GM10248 (cell line): ENCODE measurements at regions of chr17 and their contacts with region 1.

Region 1: GRCh38 chr17:42183741-42184711 is 1.2 kb downstream of the HCRT start:
- DNase-seq: peak; percentile 95
- CTCF ChIP-seq: peak; percentile 90

Region 2: GRCh38 chr17:42087736-42088705 is 96.0 kb before region 1 on chr17:
- CTCF ChIA-PET with region 1: no interaction called
- POLR2A ChIA-PET with region 1: no interaction called
- DNase-seq: no peak
- CTCF ChIP-seq: no peak

Region 3: DNA sequence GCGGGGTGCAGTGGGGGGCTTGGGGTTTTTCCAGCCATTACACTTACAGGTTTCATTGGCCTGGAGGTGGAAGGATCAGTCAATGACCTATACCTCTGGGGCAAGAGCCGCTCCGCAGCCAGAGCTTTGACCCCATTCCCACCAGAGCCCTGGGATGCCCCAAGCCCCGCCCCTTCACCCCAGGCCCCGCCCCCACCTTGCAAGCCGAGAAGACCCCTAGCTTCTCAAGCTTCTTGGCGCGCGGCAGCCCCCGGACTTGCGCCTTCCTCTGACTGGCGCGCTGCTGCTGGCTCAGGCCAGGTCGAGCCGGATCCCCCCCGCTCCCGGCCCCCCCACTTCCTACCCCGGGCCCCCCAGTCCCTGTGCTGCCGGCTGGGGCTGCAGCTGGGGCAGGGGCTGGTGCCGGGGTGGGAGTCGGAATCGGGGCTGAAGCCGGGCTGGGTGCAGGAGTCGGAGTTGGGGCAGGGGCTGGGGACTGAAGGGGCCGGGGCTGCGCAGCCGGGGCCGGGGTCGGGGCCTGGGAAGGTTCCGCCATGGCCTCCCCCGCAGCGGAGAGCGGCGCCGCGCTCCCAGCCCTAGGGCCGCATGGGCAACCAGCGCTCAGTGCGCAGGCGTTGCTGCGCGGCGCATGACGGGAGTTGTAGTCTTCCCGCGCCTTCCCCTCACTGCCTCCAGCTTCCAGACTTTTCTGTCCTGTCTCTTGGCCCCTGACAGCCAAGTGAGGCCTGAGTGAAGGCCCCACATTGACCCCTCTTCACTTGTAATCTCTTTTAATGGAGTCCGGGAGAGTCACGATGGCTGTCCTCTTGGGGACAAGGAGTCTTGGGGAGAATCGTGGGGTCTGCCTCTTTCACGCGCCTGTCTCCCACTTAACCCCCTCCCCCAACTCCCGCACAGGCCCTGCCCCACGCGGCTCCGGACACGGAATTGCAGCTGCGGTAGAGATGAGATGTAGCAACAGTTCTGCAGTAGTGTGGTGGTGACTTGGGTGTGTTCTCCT is 63.0 kb before region 1 on chr17 and contains the start of gene KAT2A:
- CTCF ChIA-PET with region 1: interaction called, 53 read pairs
- POLR2A ChIA-PET with region 1: no interaction called
- DNase-seq: peak; percentile 94
- CTCF ChIP-seq: no peak

Region 4: DNA sequence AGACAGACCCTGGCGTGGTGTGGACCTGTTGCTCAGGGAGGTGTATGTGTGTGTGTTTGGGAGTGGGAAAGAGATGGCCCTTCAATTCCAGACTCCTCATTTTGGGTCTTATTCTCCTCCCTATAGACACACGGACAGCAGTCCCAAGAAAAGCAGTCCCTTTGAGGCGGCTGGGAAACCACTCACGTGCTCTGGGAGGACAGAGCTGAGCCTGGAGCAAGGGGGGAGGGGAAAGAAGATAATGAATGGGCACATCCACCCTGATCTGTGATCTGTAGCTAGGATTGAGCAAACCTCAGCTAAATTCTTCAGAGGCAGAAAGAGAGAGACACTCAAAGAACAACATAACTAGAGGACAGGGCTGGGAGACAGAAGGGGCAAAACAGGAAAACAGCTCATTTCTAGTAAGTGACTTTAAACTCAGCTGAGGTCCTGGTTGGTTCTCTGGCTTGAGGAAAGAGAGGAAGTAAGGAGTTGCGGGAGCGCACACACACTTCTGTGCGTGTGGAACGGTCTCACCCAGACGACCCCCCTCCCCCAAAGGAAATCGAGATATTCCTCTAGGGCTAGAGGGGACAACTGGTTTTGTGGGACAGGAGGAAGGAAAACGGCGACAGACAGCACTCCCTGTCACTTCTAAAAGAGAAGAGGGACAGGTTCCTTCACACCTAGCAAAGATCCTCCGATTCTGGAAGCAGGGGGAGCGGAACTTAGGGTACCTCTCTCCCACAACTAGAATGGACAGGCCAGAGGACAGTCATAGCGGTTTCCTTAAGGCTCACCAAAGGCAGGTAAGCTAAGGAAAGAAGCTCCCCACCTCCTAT is 29.9 kb before region 1 on chr17:
- CTCF ChIA-PET with region 1: interaction called, 10 read pairs
- POLR2A ChIA-PET with region 1: interaction called, 3 read pairs
- DNase-seq: no peak
- CTCF ChIP-seq: no peak

Region 5: DNA sequence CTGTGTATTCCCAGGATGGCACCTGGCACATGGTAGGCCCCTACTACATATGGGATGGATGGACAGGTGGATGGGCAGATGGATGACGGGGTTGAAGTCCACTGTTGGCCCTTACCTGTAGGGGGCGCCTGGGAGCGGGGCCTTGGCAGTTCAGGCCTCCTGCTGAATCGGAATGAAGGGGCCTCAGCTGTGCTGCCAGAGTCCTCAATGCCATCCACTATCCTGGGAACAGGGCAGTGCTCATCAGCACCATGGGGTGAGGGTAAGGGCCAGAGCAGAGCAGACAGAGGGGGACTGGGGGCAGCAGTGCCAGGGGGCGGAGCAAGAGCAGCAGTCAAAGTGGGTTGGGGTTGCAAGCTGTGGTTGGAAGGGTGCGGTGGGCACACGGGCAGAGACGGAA is 20.9 kb before region 1 on chr17:
- CTCF ChIA-PET with region 1: interaction called, 30 read pairs
- POLR2A ChIA-PET with region 1: no interaction called
- DNase-seq: peak; percentile 61
- CTCF ChIP-seq: peak; percentile 35

Region 6: DNA sequence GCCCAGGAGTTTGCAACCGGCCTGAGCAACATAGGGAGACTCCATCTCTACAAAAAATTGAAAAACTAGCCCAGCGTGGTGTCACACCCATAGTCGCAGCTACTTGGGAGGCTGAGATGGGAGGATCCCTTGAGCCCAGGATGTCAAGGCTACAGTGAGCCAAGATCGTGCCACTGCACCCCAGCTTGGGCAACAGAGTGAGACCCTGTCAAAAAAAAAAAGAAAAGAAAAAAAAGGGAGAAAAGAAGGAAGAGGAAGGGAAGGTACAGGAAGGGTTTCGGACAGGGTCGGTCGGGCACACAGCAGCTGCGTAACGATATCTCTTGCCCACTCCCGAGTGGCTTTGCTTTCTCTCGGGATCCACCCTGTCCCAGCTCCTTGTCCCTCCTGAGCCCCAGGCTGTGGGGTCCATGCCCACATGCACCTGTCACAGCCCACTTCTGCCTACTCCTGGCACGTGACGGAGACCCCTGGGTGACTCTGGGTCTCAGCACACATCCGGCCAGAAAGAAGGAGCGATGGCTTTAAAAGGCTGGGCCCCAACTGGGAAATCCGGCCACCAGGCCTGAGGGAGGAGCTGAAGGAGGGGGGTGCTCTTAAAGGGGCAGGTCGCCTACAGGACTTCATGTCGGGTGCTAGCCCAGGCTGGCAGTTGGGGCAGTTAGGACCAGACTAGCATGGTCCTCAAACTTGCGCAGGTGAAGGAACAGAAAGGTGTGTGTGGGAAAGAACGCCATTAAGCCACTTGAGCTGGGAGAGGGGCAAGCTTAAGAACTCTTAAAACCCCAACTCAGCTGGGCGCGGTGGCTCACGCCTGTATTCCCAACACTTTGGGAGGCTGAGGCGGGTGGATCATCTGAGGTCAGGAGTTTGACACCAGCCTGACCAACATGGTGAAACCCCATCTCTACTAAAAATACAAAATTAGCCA is 10.2 kb after region 1 on chr17 and contains the start of gene GHDC:
- CTCF ChIA-PET with region 1: interaction called, 26 read pairs
- POLR2A ChIA-PET with region 1: interaction called, 7 read pairs
- DNase-seq: peak; percentile 90
- CTCF ChIP-seq: no peak

Region 7: GRCh38 chr17:42201144-42201772 is 17.2 kb after region 1 on chr17:
- CTCF ChIA-PET with region 1: interaction called, 10 read pairs
- POLR2A ChIA-PET with region 1: interaction called, 7 read pairs
- DNase-seq: no peak
- CTCF ChIP-seq: no peak

Region 8: DNA sequence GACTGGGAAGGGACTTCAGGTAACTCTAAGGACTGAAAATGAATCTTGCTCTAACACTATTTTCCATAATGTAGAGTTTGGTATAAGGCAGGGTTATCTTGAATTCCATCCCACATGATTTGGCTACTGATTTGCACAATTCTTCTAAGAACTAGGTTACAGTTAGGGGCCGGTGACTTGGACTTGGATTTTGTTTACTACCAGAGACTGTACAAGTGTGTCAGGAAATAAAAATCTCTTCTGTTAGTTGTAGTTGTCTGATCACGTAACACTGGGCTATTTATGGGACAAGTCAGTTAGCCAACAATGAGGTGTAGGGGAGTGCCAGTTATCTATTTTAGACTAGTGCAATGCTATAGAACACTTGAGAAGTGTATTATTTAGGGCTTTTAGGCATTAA is 49.9 kb after region 1 on chr17:
- CTCF ChIA-PET with region 1: no interaction called
- POLR2A ChIA-PET with region 1: no interaction called
- DNase-seq: no peak
- CTCF ChIP-seq: no peak